Posterior vena cava (tissue), 2 donors: ENCODE measurements at regions of chr12 and their contacts with region 1.

Region 1: DNA sequence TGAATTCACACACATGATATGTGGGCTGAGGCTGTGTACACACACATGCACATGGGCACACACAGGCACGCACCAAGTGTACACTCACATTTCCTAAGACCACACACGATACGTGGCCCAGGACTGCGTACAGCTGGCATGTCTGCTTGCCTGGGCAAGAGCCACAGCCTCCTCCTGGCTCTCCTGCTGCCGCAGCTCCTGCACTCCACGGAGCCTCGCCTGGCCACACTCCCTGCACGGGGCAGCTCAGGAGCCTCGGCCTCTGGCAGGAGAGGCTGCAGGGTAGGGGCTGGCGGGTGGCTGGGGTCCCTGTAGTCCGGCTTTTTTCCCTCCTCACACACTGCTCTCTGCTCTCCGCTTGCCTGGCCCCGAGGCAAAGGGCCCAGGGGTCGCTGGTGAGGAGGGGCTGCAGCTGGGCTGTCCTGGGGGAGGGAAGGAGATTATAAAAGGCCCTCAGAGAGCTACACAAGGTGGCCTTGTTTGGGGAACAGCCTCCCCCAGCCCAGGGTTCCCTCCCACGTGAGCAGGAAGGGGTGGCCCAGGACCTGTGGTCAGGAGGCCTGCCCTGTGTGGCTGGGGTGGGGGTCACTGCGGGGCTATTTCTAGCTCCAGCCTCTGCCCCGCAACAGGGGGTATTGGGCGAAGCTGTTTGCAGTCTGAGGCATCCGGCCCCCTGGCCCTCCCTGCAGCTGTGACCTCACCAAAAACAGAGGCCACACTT is 89.0 kb upstream of the SFSWAP start:
- DNase-seq: peak; percentile 73

Region 2: GRCh38 chr12:131340616-131341210 is 281.1 kb before region 1 on chr12:
- intact Hi-C with region 1: loop called in 1 of 2 experiments (anchors 2 kb)
- DNase-seq: no peak